ENCODE measurements at regions of chr7 and their contacts with region 1.

Region 1: GRCh38 chr7:70693686-70694360 is 438.1 kb upstream of the GALNT17 start:
- DNase-seq: peak; percentile 74 to 85 (median 84)
- ATAC-seq: peak; percentile 49 to 92 (median 84)
- H3K4me3 ChIP-seq: peak overlapping the region; percentile 36 to 89 (median 78)
- H3K27ac ChIP-seq: peak overlapping the region; percentile 1 to 82 (median 62)
- H3K4me1 ChIP-seq: peaks cover 0 to 21% (median 8%) of the 10 kb centered on the region in 12 donors
- H3K27me3 ChIP-seq: peaks cover 0 to 22% (median 0%) of the 10 kb centered on the region in 9 donors
- CTCF ChIP-seq: peak in 6 of 12 donors; percentile 13 to 37 (median 24)
- POLR2A ChIP-seq: peak in 1 of 2 donors; percentile 62

Region 2: DNA sequence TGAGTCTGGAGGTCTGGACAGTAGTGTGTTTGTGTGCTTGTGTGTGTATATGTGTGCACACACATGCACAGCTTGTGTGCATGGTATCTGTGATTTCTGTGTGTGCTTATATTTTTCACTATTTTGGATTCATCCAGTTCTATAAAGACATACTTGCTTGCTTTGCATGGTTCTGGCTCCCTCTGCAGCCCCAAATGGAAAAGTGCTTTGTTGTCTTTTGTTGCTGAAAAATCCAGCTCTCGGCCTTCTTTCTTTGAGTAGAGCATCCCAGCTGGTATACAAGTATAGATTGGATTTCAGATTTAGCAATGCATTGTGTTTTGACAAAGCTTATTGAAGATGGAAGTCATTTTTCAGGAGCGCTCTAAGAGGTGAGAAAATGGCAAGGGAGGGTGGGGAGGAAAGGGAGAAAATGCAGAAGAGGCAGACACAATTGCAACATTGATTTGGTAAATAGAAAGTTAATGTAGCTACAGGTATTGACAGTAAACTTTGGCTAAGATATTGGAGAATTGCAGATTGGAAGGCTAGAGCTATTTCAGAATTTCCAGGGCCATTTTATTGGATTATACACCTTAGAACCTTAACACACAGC is 761.7 kb before region 1 on chr7:
- intact Hi-C with region 1: loop called in 1 of 10 experiments (anchors 10 kb)
- DNase-seq: no peak
- ATAC-seq: peak in 3 of 4 donors; percentile 48 to 62 (median 53)
- H3K4me3 ChIP-seq: no peak overlapping the region
- H3K27ac ChIP-seq: no peak overlapping the region
- H3K4me1 ChIP-seq: peaks cover 0 to 16% (median 0%) of the 10 kb centered on the region in 12 donors
- H3K27me3 ChIP-seq: no peaks in the 10 kb centered on the region
- CTCF ChIP-seq: peak; percentile 48 to 76 (median 69)
- POLR2A ChIP-seq: no peak

Region 3: DNA sequence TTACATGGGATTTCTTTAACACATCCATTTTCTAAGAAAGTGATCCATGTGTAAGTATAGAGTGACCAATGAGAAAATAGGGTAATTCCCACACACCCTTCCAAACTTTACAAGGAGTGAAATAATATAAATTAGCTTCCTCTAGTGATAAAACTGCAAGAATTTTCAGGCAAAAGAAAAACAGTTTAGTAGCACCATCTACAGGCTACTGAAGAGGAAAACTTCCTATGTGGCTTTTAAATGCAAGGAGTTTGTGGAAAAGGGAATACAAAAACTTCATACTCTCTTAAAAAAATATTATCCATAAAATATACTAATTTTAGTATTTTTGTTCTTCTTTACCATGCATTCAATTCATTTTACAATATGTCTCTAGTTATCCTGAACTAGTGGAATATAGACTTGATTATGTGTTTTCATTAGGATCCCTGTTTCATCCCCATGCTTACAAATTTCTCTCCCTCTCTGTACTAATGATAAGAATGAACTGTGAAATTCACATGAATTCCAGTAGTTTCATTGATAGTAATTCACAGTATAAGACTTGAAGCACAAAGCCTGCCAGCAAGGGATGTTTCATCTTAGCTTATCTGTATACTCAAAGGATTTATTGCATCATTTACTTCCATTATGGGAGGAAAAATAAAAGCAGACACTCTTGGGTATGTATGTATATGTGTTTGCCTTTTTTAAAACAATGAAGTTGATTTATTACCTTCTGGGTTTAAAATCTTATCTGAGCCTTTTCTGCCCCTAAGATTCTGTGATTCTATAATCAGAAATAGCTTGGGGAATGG is 652.7 kb before region 1 on chr7:
- intact Hi-C with region 1: loop called (anchors 2 to 10 kb)
- DNase-seq: no peak
- ATAC-seq: peak in 1 of 4 donors; percentile 42
- H3K4me3 ChIP-seq: no peak overlapping the region
- H3K27ac ChIP-seq: no peak overlapping the region
- H3K4me1 ChIP-seq: peaks cover 0 to 15% (median 6%) of the 10 kb centered on the region in 12 donors
- H3K27me3 ChIP-seq: no peaks in the 10 kb centered on the region
- CTCF ChIP-seq: peak in 11 of 12 donors; percentile 29 to 69 (median 60)
- POLR2A ChIP-seq: no peak

Region 4: DNA sequence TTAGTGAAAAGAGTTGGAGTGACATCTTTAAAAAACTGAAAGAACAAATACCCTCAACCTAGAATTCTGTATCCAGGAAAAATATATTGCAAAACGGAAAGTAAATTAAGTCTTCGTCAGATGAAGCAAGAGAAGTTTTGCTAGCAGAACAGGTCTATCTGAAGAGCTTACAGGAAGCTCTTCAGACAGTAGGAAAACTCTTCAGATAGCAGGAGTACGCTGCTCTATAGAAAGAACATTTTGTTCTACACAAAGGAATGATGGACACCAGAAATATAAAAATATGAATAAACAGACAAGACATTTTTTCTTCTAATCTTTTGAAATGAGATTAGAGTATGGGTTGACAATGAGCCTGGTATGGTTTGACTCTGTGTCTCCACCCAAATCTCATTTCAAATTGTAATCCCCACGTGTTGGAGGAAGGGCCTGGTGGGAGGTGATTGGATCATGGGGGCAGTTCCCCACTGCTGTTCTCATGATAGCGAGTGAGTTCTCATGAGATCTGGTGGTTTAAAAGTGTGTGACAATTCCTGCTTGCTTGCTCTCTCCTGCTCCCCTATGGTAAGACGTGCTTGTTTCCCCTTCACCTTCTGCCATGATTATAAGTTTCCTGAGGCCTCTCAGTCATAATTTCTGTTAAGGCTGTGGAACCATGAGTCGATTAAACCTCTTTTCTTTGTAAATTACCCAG is 528.2 kb before region 1 on chr7:
- intact Hi-C with region 1: loop called in 3 of 10 experiments (anchors 10 kb)
- DNase-seq: no peak
- ATAC-seq: no peak
- H3K4me3 ChIP-seq: no peak overlapping the region
- H3K27ac ChIP-seq: no peak overlapping the region
- H3K4me1 ChIP-seq: no peaks in the 10 kb centered on the region
- H3K27me3 ChIP-seq: no peaks in the 10 kb centered on the region
- CTCF ChIP-seq: no peak
- POLR2A ChIP-seq: no peak

Region 5: GRCh38 chr7:70193514-70193913 is 500.3 kb before region 1 on chr7:
- intact Hi-C with region 1: loop called in 4 of 10 experiments (anchors 5 to 10 kb)
- DNase-seq: no peak
- ATAC-seq: no peak
- H3K4me3 ChIP-seq: no peak overlapping the region
- H3K27ac ChIP-seq: no peak overlapping the region
- H3K4me1 ChIP-seq: no peaks in the 10 kb centered on the region
- H3K27me3 ChIP-seq: no peaks in the 10 kb centered on the region
- CTCF ChIP-seq: peak in 7 of 12 donors; percentile 14 to 45 (median 36)
- POLR2A ChIP-seq: no peak

Region 6: GRCh38 chr7:70614237-70615045 is 79.4 kb before region 1 on chr7:
- intact Hi-C with region 1: loop called in 1 of 10 experiments (anchors 10 kb)
- DNase-seq: peak; percentile 75 to 89 (median 87)
- ATAC-seq: peak; percentile 95 to 97 (median 96)
- H3K4me3 ChIP-seq: no peak overlapping the region
- H3K27ac ChIP-seq: peak overlapping the region in 5 of 12 donors; percentile 4 to 44 (median 11)
- H3K4me1 ChIP-seq: peaks cover 0 to 17% (median 10%) of the 10 kb centered on the region in 12 donors
- H3K27me3 ChIP-seq: no peaks in the 10 kb centered on the region
- CTCF ChIP-seq: no peak
- POLR2A ChIP-seq: no peak

Measured in heart left ventricle (tissue), 16 donors.